CD4-positive, alpha-beta T cell (primary cell): ENCODE measurements at regions of chr2 and their contacts with region 1.

Region 1: DNA sequence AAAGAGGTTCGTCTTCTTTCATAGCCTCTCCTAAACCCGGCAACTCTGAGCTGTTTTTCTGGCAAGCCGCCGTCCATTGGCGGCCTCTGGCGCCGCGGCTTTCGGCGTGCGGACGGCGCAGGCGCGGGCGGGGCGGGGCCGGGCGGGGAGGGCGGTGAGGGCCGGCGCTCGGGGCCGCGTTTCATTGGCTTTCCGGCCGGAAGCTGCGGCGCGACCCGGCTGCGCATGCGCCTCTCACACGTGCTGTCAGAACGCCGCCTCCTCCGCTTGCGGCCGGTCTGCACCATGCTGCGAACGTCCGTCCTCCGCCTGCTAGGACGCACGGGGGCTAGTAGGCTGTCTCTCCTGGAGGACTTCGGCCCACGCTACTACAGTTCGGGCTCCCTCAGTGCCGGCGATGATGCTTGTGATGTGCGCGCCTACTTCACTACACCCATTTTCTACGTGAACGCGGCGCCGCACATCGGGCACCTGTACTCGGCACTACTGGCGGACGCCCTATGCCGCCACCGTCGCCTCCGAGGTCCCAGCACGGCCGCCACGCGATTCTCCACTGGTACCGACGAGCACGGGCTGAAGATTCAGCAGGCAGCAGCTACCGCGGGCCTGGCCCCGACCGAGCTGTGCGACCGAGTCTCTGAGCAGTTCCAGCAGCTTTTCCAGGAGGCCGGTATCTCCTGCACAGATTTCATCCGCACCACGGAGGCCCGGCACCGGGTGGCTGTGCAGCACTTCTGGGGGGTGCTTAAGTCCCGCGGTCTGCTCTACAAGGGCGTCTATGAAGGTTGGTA is at the start of gene MARS2:
- DNase-seq: peak; percentile 84 to 98 (median 92)
- ATAC-seq: peak; percentile 80
- H3K4me3 ChIP-seq: peak within 1 kb of the TSS; percentile 99
- H3K4me3 Mint-ChIP-seq: peak within 1 kb of the TSS; percentile 86
- H3K27ac ChIP-seq: peak within 1 kb of the TSS; percentile 86 to 88
- H3K27ac Mint-ChIP-seq: peak within 1 kb of the TSS; percentile 90
- H3K4me1 ChIP-seq: peaks cover 34% of the 10 kb centered on the region
- H3K4me1 Mint-ChIP-seq: peaks cover 49% of the 10 kb centered on the region
- H3K27me3 ChIP-seq: peaks cover 0 to 6% of the 10 kb centered on the region in 2 experiments
- H3K27me3 Mint-ChIP-seq: no peaks in the 10 kb centered on the region
- CTCF ChIP-seq: no peak
- total RNA-seq, gene MARS2: 7.2 to 7.8 TPM

Region 2: GRCh38 chr2:196808083-196808665 is 897.1 kb before region 1 on chr2:
- CTCF ChIA-PET with region 1: no interaction called
- POLR2A ChIA-PET with region 1: no interaction called
- intact Hi-C with region 1: loop called in 1 of 2 experiments (anchors 10 kb)
- DNase-seq: no peak
- ATAC-seq: no peak
- H3K4me3 ChIP-seq: no peak overlapping the region
- H3K4me3 Mint-ChIP-seq: no peak overlapping the region
- H3K27ac ChIP-seq: no peak overlapping the region
- H3K27ac Mint-ChIP-seq: no peak overlapping the region
- H3K4me1 ChIP-seq: no peaks in the 10 kb centered on the region
- H3K4me1 Mint-ChIP-seq: no peaks in the 10 kb centered on the region
- H3K27me3 ChIP-seq: peaks cover 4 to 10% of the 10 kb centered on the region in 2 experiments
- H3K27me3 Mint-ChIP-seq: peaks cover 44% of the 10 kb centered on the region
- CTCF ChIP-seq: no peak

Region 3: DNA sequence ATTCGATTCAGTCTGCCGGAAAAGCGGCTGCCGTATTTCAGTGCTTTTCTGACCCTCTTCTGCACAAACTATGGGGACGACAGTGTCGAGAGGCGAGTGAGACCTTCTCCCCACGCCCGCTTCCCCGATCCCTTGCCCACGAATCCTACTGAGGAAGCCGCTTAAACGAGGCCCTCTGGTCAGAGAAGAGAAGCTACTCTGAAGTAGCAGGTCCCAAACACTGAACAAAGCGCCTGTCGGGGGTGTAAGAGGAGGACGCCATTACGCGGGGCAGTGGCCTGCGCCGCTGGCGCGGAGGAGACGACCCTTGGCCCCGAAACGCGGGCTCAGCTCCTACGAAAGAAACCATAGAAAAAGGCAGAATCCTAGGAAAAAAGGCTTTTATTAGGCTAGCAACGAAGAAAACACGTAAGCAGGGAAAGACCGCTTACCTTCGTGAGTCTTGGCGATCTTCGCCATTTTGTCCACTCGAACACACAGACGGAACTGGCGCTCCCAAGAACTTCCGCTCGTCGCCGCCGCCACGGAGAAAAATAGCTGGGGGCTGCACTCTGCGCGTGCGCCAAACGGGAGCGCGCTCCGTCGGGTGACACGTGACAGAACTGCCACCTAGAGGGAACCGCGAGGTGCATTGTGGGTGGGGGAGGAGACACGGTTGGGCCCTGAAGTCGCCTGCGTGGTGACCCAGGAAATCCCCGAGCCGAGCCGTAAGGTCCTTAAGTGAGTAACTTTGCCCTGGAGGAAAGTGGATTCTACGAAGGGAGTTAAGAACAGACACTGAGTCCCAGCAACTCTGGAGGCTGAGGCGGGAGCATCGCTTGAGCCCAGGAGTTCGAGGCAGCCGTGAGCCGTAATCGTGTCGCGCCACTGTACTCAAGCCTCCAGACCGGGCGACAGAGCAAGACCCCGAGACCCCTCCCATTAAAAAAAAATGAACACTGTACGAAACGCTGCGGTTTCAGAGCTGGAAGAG is 270.5 kb before region 1 on chr2 and contains the start of gene SF3B1:
- CTCF ChIA-PET with region 1: interaction called, 3 read pairs
- POLR2A ChIA-PET with region 1: interaction called, 13 read pairs
- intact Hi-C with region 1: loop called in 1 of 2 experiments (anchors 5 kb)
- DNase-seq: peak; percentile 97 to 100 (median 99)
- ATAC-seq: peak; percentile 95
- H3K4me3 ChIP-seq: peak within 1 kb of the TSS; percentile 78
- H3K4me3 Mint-ChIP-seq: peak within 1 kb of the TSS; percentile 98
- H3K27ac ChIP-seq: peak within 1 kb of the TSS; percentile 97 to 99
- H3K27ac Mint-ChIP-seq: peak within 1 kb of the TSS; percentile 99
- H3K4me1 ChIP-seq: peaks cover 37% of the 10 kb centered on the region
- H3K4me1 Mint-ChIP-seq: peaks cover 61% of the 10 kb centered on the region
- H3K27me3 ChIP-seq: no peaks in the 10 kb centered on the region
- H3K27me3 Mint-ChIP-seq: no peaks in the 10 kb centered on the region
- CTCF ChIP-seq: no peak
- total RNA-seq, gene SF3B1: 498 to 529 TPM

Region 4: DNA sequence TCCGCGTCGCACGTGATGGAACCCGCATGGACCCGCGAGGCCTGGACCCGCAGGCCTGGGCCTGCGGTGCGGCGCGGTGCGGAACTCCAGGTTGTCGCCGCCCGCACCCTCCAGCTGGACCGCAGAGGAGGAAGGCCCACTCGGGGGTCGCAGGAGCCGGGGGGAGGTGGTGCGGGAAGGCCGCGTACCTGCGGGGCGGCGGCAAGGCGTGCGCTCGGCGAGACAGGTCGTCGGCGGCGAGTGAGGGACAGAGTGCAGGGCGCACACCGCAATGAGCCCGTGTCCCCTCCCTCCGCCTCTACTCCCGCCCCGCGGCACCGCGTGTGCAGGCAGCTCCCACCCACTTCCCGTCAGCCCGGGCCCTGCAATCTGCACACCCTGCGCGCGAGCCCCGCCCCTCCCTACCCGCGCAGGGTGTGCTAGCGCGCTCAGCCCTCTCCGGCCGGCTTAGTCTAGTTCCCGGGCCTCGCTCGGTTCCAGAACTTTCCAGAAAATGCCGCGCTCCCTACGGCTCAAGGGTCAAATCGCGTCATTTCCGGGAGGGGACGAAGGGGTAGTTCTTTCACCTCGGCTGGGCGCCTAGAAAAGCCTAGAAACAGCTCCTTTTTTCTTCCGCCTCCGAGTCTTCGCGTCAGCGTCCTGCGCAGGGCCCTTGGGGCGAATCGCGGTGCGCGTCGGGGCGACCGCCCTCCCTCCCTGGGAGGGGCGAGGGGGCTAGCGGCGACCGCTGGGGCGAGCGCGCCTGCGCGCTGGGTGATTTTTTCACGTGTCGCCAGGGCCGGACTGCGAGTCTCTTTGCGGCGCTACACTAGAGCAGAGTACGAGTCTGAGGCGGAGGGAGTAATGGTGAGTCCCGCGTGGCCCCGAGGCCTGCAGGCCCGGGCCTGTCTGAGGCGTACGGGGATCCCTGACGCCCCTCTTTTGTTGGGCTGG is 205.5 kb before region 1 on chr2 and contains the starts of genes HSPD1 and HSPE1:
- CTCF ChIA-PET with region 1: no interaction called
- POLR2A ChIA-PET with region 1: interaction called, 26 read pairs
- intact Hi-C with region 1: loop called in 1 of 2 experiments (anchors 5 kb)
- DNase-seq: peak; percentile 91 to 99 (median 95)
- ATAC-seq: peak; percentile 85
- H3K4me3 ChIP-seq: peak within 1 kb of the TSS; percentile 95
- H3K4me3 Mint-ChIP-seq: peak within 1 kb of the TSS; percentile 94
- H3K27ac ChIP-seq: peak within 1 kb of the TSS; percentile 93 to 97
- H3K27ac Mint-ChIP-seq: peak within 1 kb of the TSS; percentile 87
- H3K4me1 ChIP-seq: peaks cover 41% of the 10 kb centered on the region
- H3K4me1 Mint-ChIP-seq: peaks cover 69% of the 10 kb centered on the region
- H3K27me3 ChIP-seq: no peaks in the 10 kb centered on the region
- H3K27me3 Mint-ChIP-seq: no peaks in the 10 kb centered on the region
- CTCF ChIP-seq: no peak
- total RNA-seq, gene HSPD1: 154 to 157 TPM
- total RNA-seq, gene HSPE1: 50.8 to 56.2 TPM

Region 5: DNA sequence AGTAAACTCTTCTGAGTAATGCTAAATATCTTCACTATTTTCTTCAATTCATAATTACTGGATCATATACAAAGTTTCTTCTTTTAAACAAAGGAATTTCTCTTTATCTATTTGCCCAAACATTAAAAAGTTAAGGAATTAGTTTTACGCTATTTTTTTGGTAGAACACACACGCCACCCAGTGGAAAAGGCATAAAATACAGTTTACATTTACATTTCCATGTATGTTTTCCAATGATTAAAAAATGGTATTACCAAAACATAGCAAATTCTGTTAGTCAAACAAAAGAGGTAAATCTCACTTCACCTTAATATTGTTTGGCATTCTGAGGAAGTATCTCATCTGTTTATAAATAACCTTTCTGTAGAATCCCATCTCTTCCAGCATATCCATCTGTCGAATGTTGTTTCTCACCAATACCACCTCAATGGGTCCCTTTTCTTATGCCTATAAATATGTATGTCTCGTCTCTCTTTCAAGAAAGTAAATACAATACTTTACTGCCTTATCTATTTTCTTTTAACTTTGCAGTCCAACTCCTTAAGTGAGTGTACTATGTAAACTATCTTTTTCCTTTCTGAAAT is 72.6 kb after region 1 on chr2:
- CTCF ChIA-PET with region 1: no interaction called
- POLR2A ChIA-PET with region 1: interaction called, 5 read pairs
- intact Hi-C with region 1: loop called (anchors 2 to 5 kb)
- DNase-seq: peak in 4 of 14 experiments; percentile 46 to 58 (median 50)
- ATAC-seq: no peak
- H3K4me3 ChIP-seq: no peak overlapping the region
- H3K4me3 Mint-ChIP-seq: no peak overlapping the region
- H3K27ac ChIP-seq: no peak overlapping the region
- H3K27ac Mint-ChIP-seq: no peak overlapping the region
- H3K4me1 ChIP-seq: no peaks in the 10 kb centered on the region
- H3K4me1 Mint-ChIP-seq: no peaks in the 10 kb centered on the region
- H3K27me3 ChIP-seq: no peaks in the 10 kb centered on the region
- H3K27me3 Mint-ChIP-seq: peaks cover 18% of the 10 kb centered on the region
- CTCF ChIP-seq: peak; percentile 89

Region 6: GRCh38 chr2:198296665-198297308 is 591.5 kb after region 1 on chr2:
- CTCF ChIA-PET with region 1: no interaction called
- POLR2A ChIA-PET with region 1: no interaction called
- intact Hi-C with region 1: loop called (anchors 1 to 2 kb)
- DNase-seq: peak; percentile 28 to 82 (median 48)
- ATAC-seq: peak; percentile 77
- H3K4me3 ChIP-seq: no peak overlapping the region
- H3K4me3 Mint-ChIP-seq: no peak overlapping the region
- H3K27ac ChIP-seq: no peak overlapping the region
- H3K27ac Mint-ChIP-seq: no peak overlapping the region
- H3K4me1 ChIP-seq: no peaks in the 10 kb centered on the region
- H3K4me1 Mint-ChIP-seq: no peaks in the 10 kb centered on the region
- H3K27me3 ChIP-seq: peaks cover 0 to 2% of the 10 kb centered on the region in 2 experiments
- H3K27me3 Mint-ChIP-seq: peaks cover 32% of the 10 kb centered on the region
- CTCF ChIP-seq: peak; percentile 94